Activated CD4-positive, alpha-beta T cell treated with anti-CD3 and anti-CD28 coated beads for 36 hours (primary cell): ENCODE measurements at regions of chr7 and their contacts with region 1.

Region 1: GRCh38 chr7:16982640-16983350 is 101.0 kb upstream of the AGR3 start:
- DNase-seq: peak; percentile 45
- ATAC-seq: no peak
- H3K4me3 Mint-ChIP-seq: no peak overlapping the region
- H3K27ac Mint-ChIP-seq: no peak overlapping the region
- H3K4me1 Mint-ChIP-seq: peaks cover 6% of the 10 kb centered on the region
- H3K27me3 Mint-ChIP-seq: peaks cover 5% of the 10 kb centered on the region

Region 2: GRCh38 chr7:16993543-16993942 is 10.7 kb after region 1 on chr7:
- CTCF ChIA-PET with region 1: interaction called, 11 read pairs
- POLR2A ChIA-PET with region 1: no interaction called
- intact Hi-C with region 1: no loop called
- DNase-seq: no peak
- ATAC-seq: no peak
- H3K4me3 Mint-ChIP-seq: no peak overlapping the region
- H3K27ac Mint-ChIP-seq: no peak overlapping the region
- H3K4me1 Mint-ChIP-seq: no peaks in the 10 kb centered on the region
- H3K27me3 Mint-ChIP-seq: peaks cover 2% of the 10 kb centered on the region

Region 3: GRCh38 chr7:16999541-17000267 is 16.9 kb after region 1 on chr7:
- CTCF ChIA-PET with region 1: interaction called, 10 read pairs
- POLR2A ChIA-PET with region 1: no interaction called
- intact Hi-C with region 1: no loop called
- DNase-seq: peak; percentile 14
- ATAC-seq: peak; percentile 98
- H3K4me3 Mint-ChIP-seq: no peak overlapping the region
- H3K27ac Mint-ChIP-seq: peak overlapping the region; percentile 43
- H3K4me1 Mint-ChIP-seq: peaks cover 5% of the 10 kb centered on the region
- H3K27me3 Mint-ChIP-seq: peaks cover 2% of the 10 kb centered on the region

Region 4: GRCh38 chr7:17144322-17144721 is 161.5 kb after region 1 on chr7:
- CTCF ChIA-PET with region 1: no interaction called
- POLR2A ChIA-PET with region 1: no interaction called
- intact Hi-C with region 1: no loop called
- DNase-seq: peak; percentile 79
- ATAC-seq: peak; percentile 88
- H3K4me3 Mint-ChIP-seq: peak overlapping the region; percentile 53
- H3K27ac Mint-ChIP-seq: peak overlapping the region; percentile 83
- H3K4me1 Mint-ChIP-seq: peaks cover 51% of the 10 kb centered on the region
- H3K27me3 Mint-ChIP-seq: peaks cover 2% of the 10 kb centered on the region

Region 5: GRCh38 chr7:17530741-17531417 is 548.1 kb after region 1 on chr7:
- CTCF ChIA-PET with region 1: interaction called, 6 read pairs
- POLR2A ChIA-PET with region 1: no interaction called
- intact Hi-C with region 1: loop called (anchors 1 kb)
- DNase-seq: no peak
- ATAC-seq: peak; percentile 61
- H3K4me3 Mint-ChIP-seq: no peak overlapping the region
- H3K27ac Mint-ChIP-seq: no peak overlapping the region
- H3K4me1 Mint-ChIP-seq: no peaks in the 10 kb centered on the region
- H3K27me3 Mint-ChIP-seq: peaks cover 4% of the 10 kb centered on the region

Region 6: GRCh38 chr7:17640730-17641377 is 658.1 kb after region 1 on chr7:
- CTCF ChIA-PET with region 1: interaction called, 4 read pairs
- POLR2A ChIA-PET with region 1: no interaction called
- intact Hi-C with region 1: loop called (anchors 2 to 5 kb)
- DNase-seq: peak; percentile 38
- ATAC-seq: no peak
- H3K4me3 Mint-ChIP-seq: no peak overlapping the region
- H3K27ac Mint-ChIP-seq: no peak overlapping the region
- H3K4me1 Mint-ChIP-seq: no peaks in the 10 kb centered on the region
- H3K27me3 Mint-ChIP-seq: peaks cover 9% of the 10 kb centered on the region

Region 7: GRCh38 chr7:17646253-17646956 is 663.6 kb after region 1 on chr7:
- CTCF ChIA-PET with region 1: interaction called, 3 read pairs
- POLR2A ChIA-PET with region 1: no interaction called
- intact Hi-C with region 1: loop called (anchors 2 to 5 kb)
- DNase-seq: no peak
- ATAC-seq: no peak
- H3K4me3 Mint-ChIP-seq: no peak overlapping the region
- H3K27ac Mint-ChIP-seq: no peak overlapping the region
- H3K4me1 Mint-ChIP-seq: no peaks in the 10 kb centered on the region
- H3K27me3 Mint-ChIP-seq: peaks cover 17% of the 10 kb centered on the region